ENCODE measurements at regions of chr20 and their contacts with region 1.

Region 1: DNA sequence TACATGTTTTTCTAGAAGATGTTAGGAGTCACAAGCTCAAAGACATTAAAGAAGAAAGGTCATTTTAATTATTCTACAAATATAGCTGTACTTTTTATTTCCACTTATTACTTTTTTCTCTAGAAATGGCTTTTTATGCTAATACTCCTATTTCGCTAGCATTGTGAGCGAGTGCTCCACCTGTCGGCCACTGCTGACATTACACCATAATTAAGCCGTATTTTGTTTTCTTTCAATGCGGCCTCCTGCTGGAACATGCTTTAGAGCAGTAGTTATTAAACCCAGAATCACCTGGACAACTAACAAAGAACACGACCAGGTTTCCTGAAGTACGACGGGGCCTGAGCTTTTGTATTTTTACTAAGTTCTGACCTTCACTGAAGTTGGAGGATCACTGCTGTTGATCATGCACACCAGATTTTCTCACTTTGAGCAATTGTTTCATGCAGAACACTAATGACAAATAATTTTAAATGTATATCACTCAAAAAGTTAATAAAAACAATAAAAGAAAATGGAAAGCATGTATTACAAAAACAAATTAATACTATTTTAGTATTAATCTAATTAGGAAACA is 74.1 kb upstream of the PAK5 start:
- ATAC-seq: peak in 2 of 8 experiments; percentile 29 to 34
- H3K4me3 ChIP-seq: no peak overlapping the region
- H3K27ac ChIP-seq: no peak overlapping the region
- H3K4me1 ChIP-seq: no peaks in the 10 kb centered on the region

Region 2: GRCh38 chr20:9626357-9626756 is 286.6 kb before region 1 on chr20:
- in situ Hi-C with region 1: loop called in 2 of 9 experiments (anchors 25 kb)
- ATAC-seq: peak in 3 of 8 experiments; percentile 57 to 85 (median 82)
- H3K4me3 ChIP-seq: no peak overlapping the region
- H3K27ac ChIP-seq: no peak overlapping the region
- H3K4me1 ChIP-seq: no peaks in the 10 kb centered on the region

Region 3: DNA sequence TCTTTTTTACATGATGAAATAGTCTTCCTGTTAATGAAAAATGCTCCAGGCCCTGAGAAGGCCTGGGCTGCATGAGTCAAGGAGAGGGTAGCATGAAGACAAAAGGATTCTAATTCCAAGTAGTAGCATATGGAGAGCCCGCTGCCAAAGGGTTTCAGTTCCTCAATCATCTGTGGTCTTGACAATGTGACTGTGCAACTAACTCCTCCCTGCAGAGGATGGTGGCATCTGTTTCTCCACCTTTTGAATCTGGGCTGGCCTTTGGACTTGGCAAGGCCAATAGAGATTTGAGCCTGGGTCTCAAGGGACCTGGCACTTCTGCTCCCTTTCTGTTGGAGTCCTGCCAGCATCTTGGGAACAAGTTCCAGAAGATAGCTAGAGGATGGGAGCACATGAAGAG is 86.7 kb after region 1 on chr20:
- in situ Hi-C with region 1: no loop called
- ATAC-seq: peak in 2 of 8 experiments; percentile 54 to 58
- H3K4me3 ChIP-seq: no peak overlapping the region
- H3K27ac ChIP-seq: no peak overlapping the region
- H3K4me1 ChIP-seq: no peaks in the 10 kb centered on the region

Measured in motor neuron (in vitro differentiated cells).